Right ventricle myocardium inferior (tissue), 1 donor: ENCODE measurements at regions of chr4 and their contacts with region 1.

Region 1: GRCh38 chr4:104064646-104065577 is 345.1 kb upstream of the TACR3 start:
- DNase-seq: no peak
- ATAC-seq: no peak

Region 2: DNA sequence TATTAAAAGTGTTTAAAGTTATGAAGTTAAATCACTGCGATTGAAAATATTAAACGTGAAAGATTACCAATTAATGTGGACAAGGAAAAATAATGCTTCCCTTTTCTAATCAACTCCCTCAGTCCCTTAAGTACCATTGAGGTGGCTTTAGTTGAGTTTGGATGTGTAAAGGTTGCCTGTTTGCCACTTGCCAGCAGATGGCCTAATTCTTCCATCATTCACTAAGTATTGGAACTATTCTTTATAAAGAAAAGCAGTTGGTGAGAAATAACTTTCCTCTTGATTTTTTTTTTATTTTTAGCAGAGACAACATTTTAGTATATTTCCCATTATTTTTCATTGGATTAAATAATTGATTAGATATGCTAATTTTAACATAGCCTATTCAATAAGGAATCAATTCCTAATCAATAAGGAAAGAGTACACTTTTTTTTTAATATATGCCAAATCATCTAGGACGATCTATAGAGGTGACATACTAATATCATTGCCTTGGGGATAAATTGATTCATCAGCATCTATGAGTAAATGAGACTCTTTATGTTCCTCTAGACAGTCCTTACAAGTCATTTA is 49.1 kb before region 1 on chr4:
- intact Hi-C with region 1: no loop called
- DNase-seq: no peak
- ATAC-seq: no peak

Region 3: GRCh38 chr4:104451573-104451972 is 386.7 kb after region 1 on chr4:
- intact Hi-C with region 1: loop called (anchors 10 kb)
- DNase-seq: no peak
- ATAC-seq: no peak

Region 4: DNA sequence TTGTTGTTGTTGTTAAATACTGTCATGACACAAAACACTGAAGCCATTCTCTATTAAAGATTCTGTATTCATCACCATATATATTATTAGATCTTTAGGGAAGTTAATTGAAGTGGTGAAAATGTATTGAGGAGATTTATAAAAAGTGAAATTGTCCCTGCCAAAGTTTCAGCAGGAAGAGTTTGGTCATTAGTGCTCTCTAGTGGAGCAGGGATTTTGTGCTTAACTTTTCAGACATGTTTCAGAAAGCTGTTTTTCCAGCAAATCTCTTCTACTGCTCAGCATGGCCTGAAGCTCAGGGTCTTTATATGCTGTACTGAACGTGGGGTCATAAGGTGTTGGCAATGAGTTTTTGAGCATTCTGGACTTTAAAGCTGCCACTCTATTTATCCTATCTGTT is 466.5 kb after region 1 on chr4:
- intact Hi-C with region 1: loop called (anchors 10 kb)
- DNase-seq: no peak
- ATAC-seq: no peak

Region 5: GRCh38 chr4:104860238-104861123 is 795.6 kb after region 1 on chr4:
- intact Hi-C with region 1: loop called (anchors 2 kb)
- DNase-seq: no peak
- ATAC-seq: peak; percentile 79